HEK293 (cell line): ENCODE measurements at regions of chr5 and their contacts with region 1.

Region 1: GRCh38 chr5:17290055-17290974 is 72.9 kb downstream of the BASP1 start:
- H3K4me3 ChIP-seq: no peak overlapping the region
- H3K27ac ChIP-seq: no peak overlapping the region
- H3K4me1 ChIP-seq: 0 out of 2 replicates have a peak, but pooled peaks cover 2% of the 10 kb centered on the region
- CTCF ChIP-seq: no peak

Region 2: DNA sequence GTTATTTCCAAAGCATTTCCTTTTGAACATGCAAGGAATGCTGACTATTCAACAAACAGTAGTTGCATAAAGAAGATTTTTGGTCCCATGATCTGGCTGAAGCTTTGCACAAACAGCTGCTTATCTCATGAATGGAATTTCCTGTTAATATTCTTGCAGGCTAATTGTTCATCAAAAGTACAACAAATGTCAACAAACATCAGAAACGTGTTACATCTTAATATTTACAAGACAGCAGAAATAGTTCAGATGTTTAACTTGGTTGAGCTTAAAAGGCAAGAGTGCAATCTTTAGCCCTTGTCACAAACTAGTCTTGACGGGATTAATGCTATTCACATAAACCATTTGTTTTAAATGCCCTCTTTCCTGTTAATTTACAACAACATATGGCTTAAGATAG is 120.8 kb before region 1 on chr5:
- CTCF ChIA-PET with region 1: no interaction called
- POLR2A ChIA-PET with region 1: no interaction called
- H3K4me3 ChIP-seq: no peak overlapping the region
- H3K27ac ChIP-seq: no peak overlapping the region
- H3K4me1 ChIP-seq: peaks cover 3% of the 10 kb centered on the region; the same call in 1 of the 2 replicates
- CTCF ChIP-seq: no peak

Region 3: GRCh38 chr5:17189381-17190036 is 100.8 kb before region 1 on chr5:
- CTCF ChIA-PET with region 1: no interaction called
- POLR2A ChIA-PET with region 1: no interaction called
- H3K4me3 ChIP-seq: no peak overlapping the region
- H3K27ac ChIP-seq: no peak overlapping the region
- H3K4me1 ChIP-seq: 0 out of 2 replicates have a peak, but pooled peaks cover 5% of the 10 kb centered on the region
- CTCF ChIP-seq: peak; percentile 76

Region 4: GRCh38 chr5:17269201-17269600 is 21.1 kb before region 1 on chr5:
- CTCF ChIA-PET with region 1: no interaction called
- POLR2A ChIA-PET with region 1: no interaction called
- H3K4me3 ChIP-seq: no peak overlapping the region
- H3K27ac ChIP-seq: no peak overlapping the region
- H3K4me1 ChIP-seq: peaks cover 10% of the 10 kb centered on the region
- CTCF ChIP-seq: no peak

Region 5: GRCh38 chr5:17448877-17449276 is 158.6 kb after region 1 on chr5:
- CTCF ChIA-PET with region 1: no interaction called
- POLR2A ChIA-PET with region 1: no interaction called
- H3K4me3 ChIP-seq: no peak overlapping the region
- H3K27ac ChIP-seq: no peak overlapping the region
- H3K4me1 ChIP-seq: no peaks in the 10 kb centered on the region
- CTCF ChIP-seq: no peak

Region 6: DNA sequence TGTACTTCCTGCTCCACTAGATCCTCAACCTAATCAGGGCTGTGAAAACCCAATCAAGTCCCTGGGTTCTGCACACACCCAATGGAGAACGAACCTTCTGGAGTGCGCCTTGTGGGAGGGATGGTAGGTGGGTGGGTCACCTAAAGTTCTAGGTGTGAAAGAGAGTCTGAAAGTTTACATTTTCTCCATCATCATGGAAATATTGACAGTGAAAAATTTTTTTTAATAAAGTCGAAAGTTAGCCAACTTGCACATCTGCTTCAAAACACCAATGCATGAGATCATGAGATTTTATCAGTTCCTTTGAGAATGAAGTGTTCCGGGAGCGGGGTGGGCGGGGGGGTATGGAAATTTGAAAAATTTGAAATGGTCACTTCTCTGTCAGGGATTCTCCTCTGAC is 365.6 kb after region 1 on chr5:
- CTCF ChIA-PET with region 1: interaction called, 11 read pairs
- POLR2A ChIA-PET with region 1: no interaction called
- H3K4me3 ChIP-seq: no peak overlapping the region
- H3K27ac ChIP-seq: no peak overlapping the region
- H3K4me1 ChIP-seq: no peaks in the 10 kb centered on the region
- CTCF ChIP-seq: no peak